ENCODE measurements at regions of chrX and their contacts with region 1.

Region 1: DNA sequence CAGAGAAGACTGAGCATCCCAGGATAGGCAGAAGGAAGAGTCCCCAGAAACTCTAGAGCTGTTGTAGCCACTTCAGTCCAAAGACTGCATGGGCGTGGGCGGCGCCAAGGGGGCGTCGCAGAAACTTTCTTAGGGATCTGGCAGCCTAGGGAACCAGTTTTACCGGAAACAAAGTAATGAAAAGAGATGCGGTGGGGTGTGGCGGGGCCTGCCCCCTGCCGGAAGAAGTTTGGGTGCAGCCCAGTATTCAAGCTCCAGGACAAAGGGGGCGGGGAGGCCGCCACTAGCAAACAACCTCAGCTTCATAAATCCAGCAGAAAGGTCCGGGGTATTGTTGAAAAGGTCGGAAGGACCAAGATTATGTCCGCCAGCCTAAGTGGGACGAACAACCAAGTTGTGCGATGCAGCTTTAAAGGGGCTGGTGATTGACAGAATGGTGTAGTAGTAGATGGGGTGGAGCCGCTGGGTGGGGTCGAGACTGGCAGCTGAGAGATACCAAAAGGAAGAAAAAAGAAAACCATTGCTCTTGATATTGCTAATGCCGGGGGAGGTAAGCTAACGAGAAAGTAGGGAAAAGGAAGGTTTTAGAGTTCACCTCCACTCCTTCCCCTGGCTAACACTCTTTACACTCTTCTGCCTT is 190.5 kb downstream of the RRAGB start:
- DNase-seq: peak; percentile 32 to 67 (median 49)
- ATAC-seq: peak; percentile 32 to 89 (median 76)
- H3K4me3 ChIP-seq: peak overlapping the region; percentile 25 to 86 (median 66)
- H3K27ac ChIP-seq: peak overlapping the region; percentile 12 to 71 (median 57)
- H3K4me1 ChIP-seq: peaks cover 0 to 5% (median 0%) of the 10 kb centered on the region in 12 donors
- H3K27me3 ChIP-seq: peaks cover 0 to 3% (median 0%) of the 10 kb centered on the region in 9 donors
- CTCF ChIP-seq: peak in 11 of 12 donors; percentile 24 to 60 (median 45)
- POLR2A ChIP-seq: no peak

Region 2: GRCh38 chrX:55717521-55718497 is 190.3 kb before region 1 on chrX and contains the start of gene RRAGB:
- intact Hi-C with region 1: loop called in 1 of 10 experiments (anchors 5 kb)
- DNase-seq: peak; percentile 93 to 96 (median 94)
- ATAC-seq: peak; percentile 100
- H3K4me3 ChIP-seq: peak within 1 kb of the TSS; percentile 51 to 99 (median 70)
- H3K27ac ChIP-seq: peak within 1 kb of the TSS; percentile 62 to 89 (median 86)
- H3K4me1 ChIP-seq: peaks cover 0 to 21% (median 2%) of the 10 kb centered on the region in 12 donors
- H3K27me3 ChIP-seq: no peaks in the 10 kb centered on the region
- CTCF ChIP-seq: peak in 11 of 12 donors; percentile 23 to 58 (median 45)
- POLR2A ChIP-seq: no peak
- total RNA-seq, gene RRAGB: 8.1 to 16.1 (median 11.5) TPM

Region 3: DNA sequence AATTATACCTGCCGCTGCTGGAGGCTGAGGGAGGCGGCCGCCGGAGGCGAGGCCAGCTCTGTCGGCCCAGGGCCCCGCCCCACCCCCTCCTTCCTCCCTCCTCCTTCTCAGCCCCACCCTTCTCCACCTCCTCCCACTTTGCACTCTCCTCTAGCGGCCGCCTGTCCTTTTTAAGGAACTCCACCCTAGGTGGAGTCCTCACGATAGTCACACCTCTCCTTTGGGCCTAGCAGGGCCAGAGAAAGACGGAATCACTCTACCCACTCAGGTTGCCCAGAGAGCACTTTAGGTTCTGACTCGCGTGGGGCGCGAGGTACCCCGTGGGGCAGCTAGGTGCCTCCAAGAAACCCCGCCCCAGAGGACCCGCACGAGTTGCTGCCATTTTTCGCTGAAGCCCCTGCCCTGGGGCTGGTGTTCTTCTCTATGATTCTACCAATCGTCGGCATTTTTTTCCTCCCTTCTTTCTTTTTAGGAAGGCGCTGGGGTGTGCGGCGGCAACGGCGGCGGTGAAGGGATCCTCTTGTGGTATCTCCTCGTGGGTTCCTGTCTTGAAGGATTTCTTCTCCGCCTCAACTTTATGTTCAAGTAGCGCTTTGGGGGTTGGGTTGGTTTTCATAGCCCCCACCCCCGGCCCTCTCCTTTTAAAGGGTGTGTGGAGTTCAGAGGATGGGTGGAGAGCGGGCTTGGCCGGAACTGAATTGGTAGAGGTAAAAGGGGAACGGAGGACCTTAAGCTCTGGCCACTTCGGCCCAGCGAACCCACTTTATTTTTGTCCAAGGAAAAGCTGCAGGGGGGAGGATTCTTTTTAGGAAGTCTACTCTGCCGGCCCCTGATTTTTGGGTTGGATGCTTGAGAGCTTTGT is 324.4 kb after region 1 on chrX and contains the start of gene KLF8:
- intact Hi-C with region 1: loop called in 1 of 10 experiments (anchors 10 kb)
- DNase-seq: peak; percentile 34 to 52 (median 50)
- ATAC-seq: peak; percentile 74 to 83 (median 78)
- H3K4me3 ChIP-seq: peak within 1 kb of the TSS; percentile 13 to 69 (median 55)
- H3K27ac ChIP-seq: peak within 1 kb of the TSS; percentile 46 to 81 (median 70)
- H3K4me1 ChIP-seq: peaks cover 0 to 27% (median 1%) of the 10 kb centered on the region in 12 donors
- H3K27me3 ChIP-seq: peaks cover 0 to 19% (median 0%) of the 10 kb centered on the region in 9 donors
- CTCF ChIP-seq: no peak
- POLR2A ChIP-seq: peak in 1 of 2 donors; percentile 31
- total RNA-seq, gene KLF8: 1.4 to 6.2 (median 2.6) TPM

Region 4: DNA sequence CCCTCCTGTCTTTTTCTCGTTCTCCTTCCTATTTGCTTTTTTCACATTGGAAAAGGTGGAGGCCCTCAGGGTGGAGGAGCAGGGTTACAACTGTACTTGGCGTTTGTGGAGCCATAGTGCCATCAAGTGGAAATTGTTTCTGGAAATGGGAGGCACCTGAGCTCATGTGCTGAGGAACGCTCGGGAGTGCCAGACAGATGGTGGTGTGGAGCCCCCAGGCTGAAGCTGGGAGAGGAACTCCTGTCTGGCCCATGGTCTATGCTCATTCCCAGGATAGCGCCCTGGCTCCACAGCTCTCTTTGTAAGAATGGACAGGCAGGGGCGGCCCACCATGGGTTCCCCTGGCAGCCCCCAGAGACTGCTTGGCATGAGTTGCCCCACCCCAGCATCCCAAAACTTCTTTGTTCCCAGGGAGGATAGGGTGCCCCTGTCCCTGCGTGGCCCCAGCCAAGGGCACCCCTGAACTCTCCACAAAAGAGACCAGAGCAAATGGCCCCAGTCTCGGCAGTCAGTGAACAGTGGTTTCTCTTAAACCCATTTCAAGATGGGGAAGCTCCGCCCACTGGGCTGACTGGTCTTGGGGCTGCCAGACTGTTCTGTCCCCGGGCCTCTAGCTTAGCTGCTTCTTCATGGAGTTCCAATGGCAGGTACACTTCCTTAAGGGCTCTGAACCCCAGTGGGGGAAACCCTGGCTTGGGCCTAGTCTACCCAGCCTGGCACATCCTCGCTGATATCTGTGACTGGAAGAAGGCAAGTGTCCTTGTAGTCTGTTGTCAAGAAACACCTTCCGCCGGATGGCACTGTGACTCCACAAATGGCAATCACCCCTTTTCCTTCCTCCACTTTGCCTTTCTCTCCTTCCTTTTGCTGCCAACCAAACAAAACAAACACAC is 891.0 kb after region 1 on chrX:
- intact Hi-C with region 1: no loop called
- DNase-seq: peak in 1 of 5 donors; percentile 40
- ATAC-seq: peak in 2 of 4 donors; percentile 21 to 48
- H3K4me3 ChIP-seq: no peak overlapping the region
- H3K27ac ChIP-seq: no peak overlapping the region
- H3K4me1 ChIP-seq: peaks cover 0 to 31% (median 2%) of the 10 kb centered on the region in 12 donors
- H3K27me3 ChIP-seq: no peaks in the 10 kb centered on the region
- CTCF ChIP-seq: peak in 1 of 12 donors; percentile 13
- POLR2A ChIP-seq: no peak

Measured in heart left ventricle (tissue), 16 donors.